ENCODE measurements at regions of chr10 and their contacts with region 1.

Region 1: GRCh38 chr10:95246579-95247051 is 44.2 kb downstream of the PDLIM1 start:
- DNase-seq: peak; percentile 74
- ATAC-seq: peak; percentile 32
- H3K4me3 ChIP-seq: no peak overlapping the region
- H3K27ac ChIP-seq: no peak overlapping the region
- H3K4me1 ChIP-seq: peaks cover 25% of the 10 kb centered on the region
- H3K27me3 ChIP-seq: no peaks in the 10 kb centered on the region
- CTCF ChIP-seq: peak; percentile 80

Region 2: GRCh38 chr10:95049919-95050318 is 196.7 kb before region 1 on chr10:
- CTCF ChIA-PET with region 1: no interaction called
- POLR2A ChIA-PET with region 1: no interaction called
- intact Hi-C with region 1: no loop called
- DNase-seq: no peak
- ATAC-seq: no peak
- H3K4me3 ChIP-seq: no peak overlapping the region
- H3K27ac ChIP-seq: no peak overlapping the region
- H3K4me1 ChIP-seq: no peaks in the 10 kb centered on the region
- H3K27me3 ChIP-seq: no peaks in the 10 kb centered on the region
- CTCF ChIP-seq: no peak

Region 3: DNA sequence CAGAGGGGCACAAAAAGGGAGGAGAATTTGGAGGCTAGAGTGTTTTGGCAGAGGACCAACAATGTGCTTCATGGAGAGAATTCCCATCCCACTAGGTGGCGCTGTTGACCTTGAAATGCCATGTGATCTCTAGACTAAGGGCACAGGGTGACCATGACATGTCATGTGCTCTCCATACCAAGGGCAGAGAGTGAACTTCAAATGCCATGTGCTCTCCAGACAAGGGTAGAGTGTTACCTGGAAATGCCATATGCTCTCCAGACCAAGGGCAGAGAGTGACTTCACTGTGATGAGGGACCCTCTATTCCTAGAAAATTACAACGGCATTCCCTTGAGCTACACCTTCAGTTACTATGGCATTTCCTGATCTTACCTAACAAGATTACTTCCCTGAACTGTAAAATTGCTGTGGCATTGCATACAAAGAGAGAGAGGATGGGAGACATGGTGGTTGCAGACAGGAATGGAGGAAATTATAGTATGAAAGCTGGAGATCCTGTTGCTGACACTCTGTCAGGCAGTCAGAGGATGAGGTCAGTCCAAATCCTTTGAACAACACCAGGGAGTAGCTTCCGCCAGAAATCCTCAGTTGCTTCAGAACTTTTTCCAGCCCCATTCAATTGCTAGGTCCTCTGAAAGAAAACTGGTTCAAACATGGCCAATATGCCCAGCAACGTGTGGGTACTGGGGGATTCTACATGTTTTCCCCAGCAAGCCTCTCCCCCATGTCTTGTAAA is 113.4 kb before region 1 on chr10:
- CTCF ChIA-PET with region 1: no interaction called
- POLR2A ChIA-PET with region 1: no interaction called
- intact Hi-C with region 1: loop called (anchors 2 kb)
- DNase-seq: peak; percentile 82
- ATAC-seq: peak; percentile 62
- H3K4me3 ChIP-seq: no peak overlapping the region
- H3K27ac ChIP-seq: no peak overlapping the region
- H3K4me1 ChIP-seq: no peaks in the 10 kb centered on the region
- H3K27me3 ChIP-seq: no peaks in the 10 kb centered on the region
- CTCF ChIP-seq: peak; percentile 82

Region 4: DNA sequence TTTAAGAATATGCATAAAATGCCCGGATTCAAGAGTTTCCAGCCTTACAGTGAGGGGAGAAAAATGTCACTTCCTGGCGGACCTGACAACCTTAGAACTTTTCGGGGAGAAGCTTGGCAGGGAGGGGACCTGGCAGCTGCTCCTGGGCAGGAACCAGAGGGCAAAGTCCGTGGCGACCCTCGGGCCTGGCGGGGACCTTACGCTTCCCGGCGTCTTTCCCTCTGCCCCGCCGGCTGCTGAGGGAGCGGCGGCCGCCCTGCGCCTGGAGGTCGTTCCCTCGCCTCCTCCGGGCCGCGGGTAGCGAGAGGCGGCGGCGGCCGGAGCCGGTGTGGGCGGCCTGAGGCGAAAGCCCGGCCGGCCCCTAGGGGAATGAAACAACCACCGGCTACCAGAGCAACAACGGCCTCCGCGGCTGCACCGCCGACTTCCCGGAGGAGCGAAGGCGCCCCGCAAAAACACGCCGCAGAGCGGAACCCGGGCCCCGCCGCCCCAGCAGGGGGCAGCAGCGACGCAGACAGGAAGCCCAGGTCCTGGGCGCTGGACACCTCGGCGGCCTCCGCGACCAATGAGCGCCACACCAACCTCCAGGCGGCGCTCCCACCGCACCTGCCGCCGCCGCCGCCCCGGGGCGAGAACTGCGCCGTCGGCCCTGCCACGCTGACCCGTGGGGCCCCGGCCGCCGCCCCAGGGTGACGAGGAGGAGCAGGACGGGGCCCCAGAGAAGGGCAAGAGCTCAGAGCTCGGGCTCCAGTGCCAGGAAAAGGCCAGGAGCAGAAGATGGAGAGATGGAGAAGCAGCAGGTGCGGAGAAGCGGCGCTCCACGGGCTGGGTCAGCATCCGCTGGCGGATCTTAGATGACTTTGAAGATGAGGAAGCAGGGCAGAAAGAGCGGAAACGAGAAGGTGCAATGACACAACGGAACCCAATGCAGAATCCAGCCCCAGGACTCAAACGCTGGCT is 63.1 kb before region 1 on chr10:
- CTCF ChIA-PET with region 1: interaction called, 3 read pairs
- POLR2A ChIA-PET with region 1: no interaction called
- intact Hi-C with region 1: loop called (anchors 10 kb)
- DNase-seq: peak; percentile 85
- ATAC-seq: peak; percentile 97
- H3K4me3 ChIP-seq: peak overlapping the region; percentile 71
- H3K27ac ChIP-seq: no peak overlapping the region
- H3K4me1 ChIP-seq: no peaks in the 10 kb centered on the region; the same call in 1 of the 2 replicates
- H3K27me3 ChIP-seq: no peaks in the 10 kb centered on the region
- CTCF ChIP-seq: peak; percentile 87

Region 5: DNA sequence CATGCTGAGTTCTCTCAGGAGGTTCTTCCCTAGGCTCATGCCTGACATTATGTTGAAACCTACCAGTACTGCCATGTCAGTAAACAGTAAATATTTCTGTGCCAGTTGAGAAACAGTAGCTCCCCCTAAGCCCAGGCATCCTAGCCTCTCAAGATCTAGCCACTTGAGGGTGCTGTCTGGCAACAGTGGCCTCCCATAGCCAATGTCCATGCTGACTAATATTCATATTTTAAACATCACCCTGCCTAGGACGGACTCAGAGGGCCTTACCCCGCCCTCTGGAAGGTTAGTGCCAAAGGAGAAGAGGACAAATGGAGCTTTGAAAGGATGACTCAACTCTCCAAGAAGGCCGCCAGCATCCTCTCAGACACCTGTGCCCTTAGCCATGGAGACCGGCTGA is 44.9 kb before region 1 on chr10:
- CTCF ChIA-PET with region 1: interaction called, 35 read pairs
- POLR2A ChIA-PET with region 1: no interaction called
- intact Hi-C with region 1: loop called (anchors 1 kb)
- DNase-seq: peak; percentile 92
- ATAC-seq: peak; percentile 100
- H3K4me3 ChIP-seq: no peak overlapping the region
- H3K27ac ChIP-seq: no peak overlapping the region
- H3K4me1 ChIP-seq: no peaks in the 10 kb centered on the region
- H3K27me3 ChIP-seq: no peaks in the 10 kb centered on the region
- CTCF ChIP-seq: peak; percentile 88

Region 6: GRCh38 chr10:95208702-95209391 is 37.8 kb before region 1 on chr10:
- CTCF ChIA-PET with region 1: interaction called, 10 read pairs
- POLR2A ChIA-PET with region 1: no interaction called
- intact Hi-C with region 1: no loop called
- DNase-seq: peak; percentile 33
- ATAC-seq: no peak; the same call in 1 of the 2 replicates
- H3K4me3 ChIP-seq: no peak overlapping the region
- H3K27ac ChIP-seq: no peak overlapping the region
- H3K4me1 ChIP-seq: peaks cover 20% of the 10 kb centered on the region
- H3K27me3 ChIP-seq: no peaks in the 10 kb centered on the region
- CTCF ChIP-seq: peak; percentile 59

Region 7: GRCh38 chr10:95289003-95289920 is 42.6 kb after region 1 on chr10:
- CTCF ChIA-PET with region 1: no interaction called
- POLR2A ChIA-PET with region 1: no interaction called
- intact Hi-C with region 1: loop called (anchors 5 kb)
- DNase-seq: peak; percentile 71
- ATAC-seq: peak; percentile 23
- H3K4me3 ChIP-seq: peak overlapping the region; percentile 95
- H3K27ac ChIP-seq: peak overlapping the region; percentile 29; the same call in 1 of the 2 replicates
- H3K4me1 ChIP-seq: peaks cover 26% of the 10 kb centered on the region
- H3K27me3 ChIP-seq: no peaks in the 10 kb centered on the region
- CTCF ChIP-seq: peak; percentile 45

Region 8: DNA sequence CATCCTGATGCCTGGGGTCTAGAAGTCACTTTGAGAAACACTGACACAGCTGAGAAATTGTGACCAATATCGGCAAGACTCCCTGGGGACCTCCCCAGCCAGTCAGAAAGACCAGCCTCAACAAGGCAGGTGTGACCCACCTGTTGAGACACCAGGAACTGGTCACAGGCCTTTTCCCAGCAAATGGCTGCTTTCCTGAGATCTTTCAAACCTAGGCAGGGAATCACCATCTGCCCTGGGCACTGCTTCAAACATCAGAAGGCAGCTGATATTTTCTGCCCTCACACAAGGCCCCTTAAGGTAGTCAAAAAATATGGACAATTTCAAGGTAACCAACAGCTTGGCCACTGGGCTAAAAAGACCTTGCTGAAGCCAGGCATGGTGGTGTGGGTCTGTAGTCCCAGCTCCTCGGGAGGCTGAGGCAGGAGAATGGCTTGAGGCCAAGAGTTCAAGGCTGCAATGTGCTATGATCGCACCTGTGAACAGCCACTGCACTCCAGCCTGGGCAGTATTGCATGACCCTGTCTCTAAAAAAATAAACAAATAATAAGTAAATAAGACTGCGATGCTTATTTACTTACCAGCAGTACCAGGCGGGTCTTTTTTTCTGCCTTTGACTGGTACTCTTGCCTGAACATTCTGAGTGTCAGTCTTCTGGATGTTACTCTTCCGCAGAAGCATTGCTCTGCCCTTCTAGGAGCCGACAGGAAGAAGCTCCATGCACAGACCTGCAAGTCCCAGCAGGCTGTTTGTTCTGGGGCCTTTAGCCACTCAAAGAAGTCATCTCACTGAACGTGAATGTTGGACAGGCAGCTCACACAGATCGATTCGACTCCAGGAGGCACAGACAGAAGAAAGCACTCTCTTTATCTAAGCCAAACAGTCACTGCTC is 254.8 kb after region 1 on chr10:
- CTCF ChIA-PET with region 1: no interaction called
- POLR2A ChIA-PET with region 1: no interaction called
- intact Hi-C with region 1: no loop called
- DNase-seq: no peak
- ATAC-seq: no peak
- H3K4me3 ChIP-seq: no peak overlapping the region
- H3K27ac ChIP-seq: no peak overlapping the region
- H3K4me1 ChIP-seq: no peaks in the 10 kb centered on the region
- H3K27me3 ChIP-seq: no peaks in the 10 kb centered on the region
- CTCF ChIP-seq: no peak

Measured in PC-3 (cell line).